Caco-2 (cell line): ENCODE measurements at regions of chr20 and their contacts with region 1.

Region 1: GRCh38 chr20:33666293-33667244 is at the start of gene ACTL10:
- DNase-seq: peak; percentile 100
- H3K4me3 ChIP-seq: peak within 1 kb of the TSS; percentile 78
- H3K4me3 Mint-ChIP-seq: peak within 1 kb of the TSS; percentile 84
- H3K27ac Mint-ChIP-seq: peak within 1 kb of the TSS; percentile 85
- H3K4me1 ChIP-seq: peaks cover 25% of the 10 kb centered on the region
- H3K4me1 Mint-ChIP-seq: peaks cover 24% of the 10 kb centered on the region
- H3K27me3 ChIP-seq: no peaks in the 10 kb centered on the region
- H3K27me3 Mint-ChIP-seq: no peaks in the 10 kb centered on the region
- CTCF ChIP-seq: peak; percentile 19 to 64
- total RNA-seq, gene ACTL10: 3.4 and 4.5 TPM in 2 replicates

Region 2: GRCh38 chr20:33460711-33461110 is 205.9 kb before region 1 on chr20:
- CTCF ChIA-PET with region 1: interaction called, 24 read pairs
- POLR2A ChIA-PET with region 1: no interaction called
- intact Hi-C with region 1: loop called (anchors 1 kb)
- DNase-seq: no peak
- H3K4me3 ChIP-seq: no peak overlapping the region
- H3K4me3 Mint-ChIP-seq: no peak overlapping the region
- H3K27ac Mint-ChIP-seq: no peak overlapping the region
- H3K4me1 ChIP-seq: no peaks in the 10 kb centered on the region; the same call in 1 of the 2 replicates
- H3K4me1 Mint-ChIP-seq: no peaks in the 10 kb centered on the region
- H3K27me3 ChIP-seq: no peaks in the 10 kb centered on the region
- H3K27me3 Mint-ChIP-seq: no peaks in the 10 kb centered on the region
- CTCF ChIP-seq: no peak

Region 3: DNA sequence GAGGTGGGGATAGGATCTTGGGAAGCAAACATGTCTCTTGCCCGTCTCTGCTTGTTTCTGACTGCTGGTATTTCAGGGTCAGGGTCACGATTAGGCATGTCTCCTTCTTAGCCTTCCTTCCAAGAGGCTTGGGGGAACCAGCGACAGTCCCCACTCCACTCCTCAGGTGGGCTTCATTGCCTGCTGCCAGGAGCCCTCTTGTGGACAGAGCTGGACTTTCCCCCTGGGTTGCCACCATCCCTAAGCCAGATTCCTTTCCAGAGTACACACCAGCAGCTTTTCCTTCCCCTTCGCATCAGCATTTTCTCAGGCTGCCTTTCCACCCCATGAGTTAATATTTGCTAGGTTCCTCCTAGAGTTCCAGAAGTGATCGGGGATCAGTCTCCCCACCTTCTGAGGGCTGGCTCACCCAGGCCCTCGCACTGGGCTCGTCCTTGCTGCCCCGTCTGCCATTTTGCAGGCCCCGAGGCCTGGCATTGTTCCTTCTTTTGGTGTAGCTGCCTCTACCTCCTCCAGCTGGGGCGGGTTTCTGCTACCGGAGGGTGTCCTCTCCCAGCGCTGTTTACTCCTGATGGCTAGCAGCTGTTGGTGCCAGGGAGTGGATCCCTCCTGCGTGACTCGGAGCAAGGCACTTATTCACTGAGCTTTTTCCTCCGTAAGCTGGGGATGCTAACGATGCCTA is 13.2 kb before region 1 on chr20:
- CTCF ChIA-PET with region 1: interaction called, 127 read pairs
- POLR2A ChIA-PET with region 1: interaction called, 28 read pairs
- intact Hi-C with region 1: no loop called
- DNase-seq: peak; percentile 90 to 92
- H3K4me3 ChIP-seq: no peak overlapping the region
- H3K4me3 Mint-ChIP-seq: peak overlapping the region; percentile 24
- H3K27ac Mint-ChIP-seq: peak overlapping the region; percentile 66
- H3K4me1 ChIP-seq: peaks cover 27% of the 10 kb centered on the region
- H3K4me1 Mint-ChIP-seq: peaks cover 25% of the 10 kb centered on the region
- H3K27me3 ChIP-seq: no peaks in the 10 kb centered on the region
- H3K27me3 Mint-ChIP-seq: no peaks in the 10 kb centered on the region
- CTCF ChIP-seq: peak; percentile 99

Region 4: DNA sequence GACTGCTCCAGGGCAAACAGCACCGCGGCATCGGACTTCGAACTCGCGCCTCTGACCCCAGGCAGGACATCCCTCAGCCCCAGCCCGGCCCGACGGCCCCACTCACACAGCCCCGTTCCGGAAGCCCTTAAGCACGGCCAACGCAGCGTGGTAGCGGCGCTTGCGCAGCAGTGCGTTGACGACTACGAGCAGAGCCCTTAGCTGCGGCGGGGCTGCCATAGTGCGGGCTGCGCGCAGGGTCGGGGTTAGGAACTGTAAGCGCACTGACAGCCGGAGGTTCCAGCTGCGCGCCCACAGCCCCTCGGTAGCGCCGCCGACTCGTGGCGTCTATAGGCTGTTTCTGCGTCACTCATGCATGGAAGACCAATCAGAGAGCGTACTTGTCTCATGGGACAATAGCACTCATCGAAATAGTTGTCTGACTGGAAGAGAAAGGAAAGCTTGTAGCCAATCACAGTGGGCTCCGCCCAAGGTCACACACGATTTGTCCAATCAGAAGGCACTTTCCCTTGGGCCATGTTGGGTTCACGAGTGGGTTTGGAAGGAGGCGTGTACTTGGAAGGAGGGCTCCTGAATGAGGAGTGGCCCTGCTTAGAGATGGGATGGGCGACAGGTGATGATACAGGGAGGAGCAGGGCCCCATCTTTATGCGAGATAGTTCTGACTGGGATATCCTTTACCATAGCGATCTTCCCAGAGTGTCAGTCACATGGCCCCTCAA is 53.6 kb after region 1 on chr20 and contains the start of gene PXMP4:
- CTCF ChIA-PET with region 1: interaction called, 34 read pairs
- POLR2A ChIA-PET with region 1: interaction called, 19 read pairs
- intact Hi-C with region 1: loop called (anchors 1 kb)
- DNase-seq: peak; percentile 99 to 100
- H3K4me3 ChIP-seq: peak within 1 kb of the TSS; percentile 65
- H3K4me3 Mint-ChIP-seq: peak within 1 kb of the TSS; percentile 71
- H3K27ac Mint-ChIP-seq: peak within 1 kb of the TSS; percentile 33
- H3K4me1 ChIP-seq: peaks cover 22% of the 10 kb centered on the region
- H3K4me1 Mint-ChIP-seq: no peaks in the 10 kb centered on the region
- H3K27me3 ChIP-seq: no peaks in the 10 kb centered on the region
- H3K27me3 Mint-ChIP-seq: no peaks in the 10 kb centered on the region
- CTCF ChIP-seq: no peak
- total RNA-seq, gene PXMP4: 37.3 and 39.5 TPM in 2 replicates

Region 5: GRCh38 chr20:34111702-34112599 is 445.4 kb after region 1 on chr20 and contains the start of gene EIF2S2:
- CTCF ChIA-PET with region 1: no interaction called
- POLR2A ChIA-PET with region 1: interaction called, 19 read pairs
- intact Hi-C with region 1: no loop called
- DNase-seq: peak; percentile 100
- H3K4me3 ChIP-seq: peak within 1 kb of the TSS; percentile 98
- H3K4me3 Mint-ChIP-seq: peak within 1 kb of the TSS; percentile 77
- H3K27ac Mint-ChIP-seq: peak within 1 kb of the TSS; percentile 99
- H3K4me1 ChIP-seq: peaks cover 8% of the 10 kb centered on the region
- H3K4me1 Mint-ChIP-seq: peaks cover 37% of the 10 kb centered on the region
- H3K27me3 ChIP-seq: no peaks in the 10 kb centered on the region
- H3K27me3 Mint-ChIP-seq: no peaks in the 10 kb centered on the region
- CTCF ChIP-seq: no peak
- total RNA-seq, gene EIF2S2: 291 and 299 TPM in 2 replicates